ENCODE measurements at regions of chr7 and their contacts with region 1.

Region 1: DNA sequence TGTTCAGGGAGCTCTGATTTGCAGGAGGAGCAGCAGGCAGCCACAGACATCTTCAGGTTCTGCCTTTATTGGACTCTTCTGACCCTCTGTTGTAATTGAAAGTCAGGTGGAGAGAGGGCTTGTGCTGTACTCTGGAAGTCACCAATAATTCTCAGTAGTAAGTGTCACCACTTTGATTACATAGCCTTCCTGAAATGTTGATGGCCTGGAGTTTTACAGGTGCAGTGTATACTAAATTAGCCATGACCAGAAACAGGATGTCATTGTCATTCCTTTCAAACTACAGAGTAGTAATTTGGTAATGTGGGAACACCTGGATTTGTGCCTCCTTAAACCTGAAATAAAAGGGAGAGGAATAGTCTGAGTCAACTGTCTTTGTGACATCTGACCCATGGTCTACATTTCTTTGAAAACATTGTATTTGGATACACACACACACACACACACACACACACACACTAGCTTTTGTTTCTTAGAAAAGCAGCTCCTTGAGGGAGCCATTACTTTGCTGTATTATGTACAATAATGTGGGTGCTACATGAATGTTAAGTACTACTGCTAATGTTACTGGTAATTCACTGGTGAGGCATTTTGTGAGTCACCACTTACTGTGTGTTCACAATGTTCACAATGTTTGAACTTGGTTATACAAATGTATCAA is 19.6 kb downstream of the ARL4A start:
- DNase-seq: no peak
- ATAC-seq: no peak
- H3K4me3 ChIP-seq: no peak overlapping the region
- H3K4me3 Mint-ChIP-seq: no peak overlapping the region
- H3K27ac ChIP-seq: no peak overlapping the region
- H3K27ac Mint-ChIP-seq: no peak overlapping the region
- H3K4me1 ChIP-seq: no peaks in the 10 kb centered on the region
- H3K4me1 Mint-ChIP-seq: no peaks in the 10 kb centered on the region
- H3K27me3 ChIP-seq: no peaks in the 10 kb centered on the region
- H3K27me3 Mint-ChIP-seq: no peaks in the 10 kb centered on the region
- CTCF ChIP-seq: no peak

Region 2: DNA sequence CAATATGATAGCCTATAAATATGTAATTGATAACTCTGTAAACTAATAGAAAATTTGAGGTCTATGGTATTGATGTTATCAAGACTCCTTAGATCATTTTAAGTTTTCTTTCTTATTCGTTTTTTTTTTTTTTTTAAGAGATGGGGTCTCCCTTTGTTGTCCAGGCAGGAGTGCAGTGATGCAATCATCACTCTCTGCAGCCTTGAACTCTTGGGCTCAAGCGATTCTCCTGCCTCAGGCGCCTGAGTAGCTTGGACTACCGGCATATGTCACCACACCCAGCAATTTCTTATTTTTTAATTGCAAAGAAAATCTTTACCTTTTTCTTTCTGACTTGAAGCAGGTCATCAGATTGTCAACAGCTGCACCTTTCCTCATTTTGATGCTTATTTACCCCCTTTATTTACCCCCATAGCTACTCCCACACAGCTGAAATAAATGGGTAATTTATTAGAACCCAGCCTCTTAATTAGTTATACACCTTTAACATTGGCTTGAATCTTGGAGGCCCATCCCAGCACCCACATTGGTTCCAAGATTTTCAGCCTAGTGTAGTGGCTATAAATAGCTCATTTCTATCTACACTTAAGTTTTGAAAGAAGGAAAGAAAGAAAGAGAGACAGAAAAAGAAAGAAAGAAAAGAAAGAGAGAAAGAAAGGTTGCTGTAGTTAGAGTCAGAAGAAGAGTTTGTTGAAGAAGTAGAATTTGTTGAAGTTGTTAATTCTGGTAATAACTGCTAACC is 18.7 kb after region 1 on chr7:
- CTCF ChIA-PET with region 1: no interaction called
- POLR2A ChIA-PET with region 1: no interaction called
- intact Hi-C with region 1: no loop called
- DNase-seq: no peak
- ATAC-seq: no peak
- H3K4me3 ChIP-seq: no peak overlapping the region
- H3K4me3 Mint-ChIP-seq: no peak overlapping the region
- H3K27ac ChIP-seq: no peak overlapping the region
- H3K27ac Mint-ChIP-seq: no peak overlapping the region
- H3K4me1 ChIP-seq: peaks cover under 1% of the 10 kb centered on the region
- H3K4me1 Mint-ChIP-seq: peaks cover 11% of the 10 kb centered on the region
- H3K27me3 ChIP-seq: no peaks in the 10 kb centered on the region
- H3K27me3 Mint-ChIP-seq: no peaks in the 10 kb centered on the region
- CTCF ChIP-seq: no peak

Region 3: DNA sequence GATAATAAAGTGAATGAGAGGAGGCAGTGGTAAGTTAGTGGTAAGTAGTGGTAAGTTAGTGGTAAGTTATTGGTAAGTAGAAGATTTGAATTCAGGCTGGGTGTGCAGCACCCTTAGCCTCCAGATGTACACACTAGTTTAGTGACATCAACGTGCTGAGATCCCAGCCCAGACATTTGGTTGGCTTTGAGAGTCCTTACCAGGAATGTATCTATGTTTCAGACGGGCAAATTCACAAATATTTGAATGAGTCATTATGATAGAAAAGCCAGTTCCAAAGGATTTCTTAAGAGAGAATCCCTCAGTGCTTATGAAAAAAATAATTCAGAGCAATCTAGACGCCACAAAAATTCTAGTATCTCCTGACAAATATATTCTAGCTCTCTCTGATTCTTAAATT is 50.4 kb after region 1 on chr7:
- CTCF ChIA-PET with region 1: no interaction called
- POLR2A ChIA-PET with region 1: no interaction called
- intact Hi-C with region 1: loop called in 1 of 2 experiments (anchors 5 kb)
- DNase-seq: no peak
- ATAC-seq: no peak
- H3K4me3 ChIP-seq: no peak overlapping the region
- H3K4me3 Mint-ChIP-seq: no peak overlapping the region
- H3K27ac ChIP-seq: no peak overlapping the region
- H3K27ac Mint-ChIP-seq: no peak overlapping the region
- H3K4me1 ChIP-seq: no peaks in the 10 kb centered on the region
- H3K4me1 Mint-ChIP-seq: no peaks in the 10 kb centered on the region
- H3K27me3 ChIP-seq: no peaks in the 10 kb centered on the region
- H3K27me3 Mint-ChIP-seq: no peaks in the 10 kb centered on the region
- CTCF ChIP-seq: no peak

Measured in CD4-positive, alpha-beta T cell (primary cell).